Naive thymus-derived CD8-positive, alpha-beta T cell (primary cell): ENCODE measurements at regions of chr2 and their contacts with region 1.

Region 1: GRCh38 chr2:223944703-223945531 is at the start of gene WDFY1:
- DNase-seq: peak; percentile 62 to 82 (median 73)
- ATAC-seq: peak; percentile 93 to 95
- H3K4me3 Mint-ChIP-seq: peak within 1 kb of the TSS; percentile 90 to 96 (median 92)
- H3K27ac Mint-ChIP-seq: peak within 1 kb of the TSS; percentile 70 to 92 (median 88)
- H3K4me1 Mint-ChIP-seq: peaks cover 28 to 52% (median 47%) of the 10 kb centered on the region in 4 donors
- H3K27me3 Mint-ChIP-seq: no peaks in the 10 kb centered on the region
- polyA plus RNA-seq, gene WDFY1: 15.7 to 24.1 (median 19.1) TPM

Region 2: GRCh38 chr2:223832241-223832903 is 112.5 kb before region 1 on chr2:
- POLR2A ChIA-PET with region 1: no interaction called
- DNase-seq: no peak
- ATAC-seq: no peak
- H3K4me3 Mint-ChIP-seq: no peak overlapping the region
- H3K27ac Mint-ChIP-seq: no peak overlapping the region
- H3K4me1 Mint-ChIP-seq: peaks cover 4 to 18% (median 12%) of the 10 kb centered on the region in 4 donors
- H3K27me3 Mint-ChIP-seq: peaks cover 0 to 11% (median 10%) of the 10 kb centered on the region in 5 donors

Region 3: GRCh38 chr2:223896833-223897311 is 48.0 kb before region 1 on chr2:
- POLR2A ChIA-PET with region 1: no interaction called
- DNase-seq: peak in 1 of 10 donors; percentile 7
- ATAC-seq: no peak
- H3K4me3 Mint-ChIP-seq: peak overlapping the region in 1 of 10 donors; percentile 12
- H3K27ac Mint-ChIP-seq: peak overlapping the region in 3 of 10 donors; percentile 22 to 60 (median 25)
- H3K4me1 Mint-ChIP-seq: peaks cover 0 to 21% (median 1%) of the 10 kb centered on the region in 4 donors
- H3K27me3 Mint-ChIP-seq: no peaks in the 10 kb centered on the region

Region 4: GRCh38 chr2:223957092-223957851 is 12.4 kb after region 1 on chr2 and contains the start of gene MRPL44:
- POLR2A ChIA-PET with region 1: interaction called, 35 read pairs
- DNase-seq: peak; percentile 89 to 99 (median 96)
- ATAC-seq: peak; percentile 99 to 100
- H3K4me3 Mint-ChIP-seq: peak within 1 kb of the TSS; percentile 86 to 97 (median 94)
- H3K27ac Mint-ChIP-seq: peak within 1 kb of the TSS; percentile 93 to 99 (median 97)
- H3K4me1 Mint-ChIP-seq: peaks cover 20 to 60% (median 44%) of the 10 kb centered on the region in 4 donors
- H3K27me3 Mint-ChIP-seq: peaks cover 0 to 1% (median 0%) of the 10 kb centered on the region in 5 donors
- polyA plus RNA-seq, gene MRPL44: 29.3 to 36.4 (median 31.2) TPM

Region 5: DNA sequence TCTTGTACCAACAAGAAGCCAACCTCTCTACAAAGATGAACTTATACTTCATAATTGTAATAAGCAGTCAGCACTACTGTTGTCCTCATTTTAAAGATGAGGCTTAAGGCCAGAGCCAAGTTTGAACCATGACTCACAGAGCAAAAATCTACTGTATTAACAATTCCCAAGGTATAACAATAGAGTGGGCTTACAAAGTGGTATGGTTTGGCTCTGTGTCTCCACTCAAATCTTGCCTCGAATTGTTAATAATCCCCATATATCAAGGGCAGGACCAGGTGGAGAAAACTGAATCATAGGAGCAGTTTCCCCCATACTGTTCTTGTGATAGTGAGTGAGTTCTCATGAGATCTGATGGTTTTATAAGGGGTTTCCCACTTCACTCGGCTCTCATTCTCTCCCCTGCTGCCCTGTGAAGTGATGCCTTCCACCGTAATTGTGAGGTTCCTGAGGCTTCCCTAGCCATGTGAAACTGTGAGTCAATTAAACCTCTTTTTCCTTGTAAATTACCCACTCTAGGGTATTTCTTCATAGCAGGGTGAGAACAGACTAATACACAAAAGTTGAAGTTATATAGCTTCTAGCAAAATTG is 31.8 kb after region 1 on chr2:
- POLR2A ChIA-PET with region 1: no interaction called
- DNase-seq: no peak
- ATAC-seq: no peak
- H3K4me3 Mint-ChIP-seq: no peak overlapping the region
- H3K27ac Mint-ChIP-seq: no peak overlapping the region
- H3K4me1 Mint-ChIP-seq: no peaks in the 10 kb centered on the region
- H3K27me3 Mint-ChIP-seq: no peaks in the 10 kb centered on the region